Activated CD4-positive, alpha-beta memory T cell treated with anti-CD3 and anti-CD28 coated beads for 36 hours (primary cell): ENCODE measurements at regions of chr2 and their contacts with region 1.

Region 1: GRCh38 chr2:239882331-239882732 is 142.8 kb downstream of the NDUFA10 start:
- DNase-seq: peak; percentile 66
- H3K4me3 Mint-ChIP-seq: no peak overlapping the region
- H3K27ac Mint-ChIP-seq: no peak overlapping the region
- H3K4me1 Mint-ChIP-seq: peaks cover 3% of the 10 kb centered on the region
- H3K27me3 Mint-ChIP-seq: peaks cover 2% of the 10 kb centered on the region

Region 2: DNA sequence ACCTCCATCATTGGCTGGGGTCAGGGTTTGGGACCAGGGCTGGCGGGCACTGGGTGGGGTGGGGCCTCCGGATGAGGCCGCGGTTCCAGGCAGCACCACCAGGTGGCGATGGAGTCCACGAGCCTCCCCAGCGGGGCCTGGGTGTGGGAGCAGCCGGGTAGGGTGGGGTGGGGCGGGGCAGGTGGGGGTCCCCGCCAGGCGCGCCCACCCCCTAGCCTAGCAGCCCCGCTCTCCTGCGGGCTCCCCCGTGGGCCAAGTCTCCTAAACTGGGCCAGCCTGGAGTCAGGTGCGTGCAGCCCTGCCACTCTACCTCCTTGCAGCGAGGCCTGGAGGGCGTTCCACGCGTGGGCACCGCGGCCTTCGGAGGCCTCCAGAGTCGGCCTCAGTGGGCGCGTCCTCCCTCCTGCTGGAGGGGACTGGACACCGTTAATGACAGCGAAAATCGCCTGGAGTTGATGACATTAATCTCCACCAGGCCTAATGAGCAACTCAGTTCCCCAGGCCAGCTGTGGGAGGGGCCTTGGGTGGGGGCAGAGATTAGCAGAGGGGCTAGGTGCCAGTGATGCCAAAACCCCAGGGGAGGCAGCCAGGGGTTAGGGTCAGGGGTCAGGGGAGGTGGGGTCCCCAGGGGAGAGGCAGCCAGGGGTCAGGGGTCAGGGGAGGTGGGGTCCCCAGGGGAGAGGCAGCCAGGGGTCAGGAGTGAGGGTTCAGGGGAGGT is 846.8 kb before region 1 on chr2:
- CTCF ChIA-PET with region 1: no interaction called
- POLR2A ChIA-PET with region 1: no interaction called
- intact Hi-C with region 1: loop called (anchors 5 kb)
- DNase-seq: peak; percentile 76
- H3K4me3 Mint-ChIP-seq: no peak overlapping the region
- H3K27ac Mint-ChIP-seq: no peak overlapping the region
- H3K4me1 Mint-ChIP-seq: no peaks in the 10 kb centered on the region
- H3K27me3 Mint-ChIP-seq: peaks cover 5% of the 10 kb centered on the region

Region 3: DNA sequence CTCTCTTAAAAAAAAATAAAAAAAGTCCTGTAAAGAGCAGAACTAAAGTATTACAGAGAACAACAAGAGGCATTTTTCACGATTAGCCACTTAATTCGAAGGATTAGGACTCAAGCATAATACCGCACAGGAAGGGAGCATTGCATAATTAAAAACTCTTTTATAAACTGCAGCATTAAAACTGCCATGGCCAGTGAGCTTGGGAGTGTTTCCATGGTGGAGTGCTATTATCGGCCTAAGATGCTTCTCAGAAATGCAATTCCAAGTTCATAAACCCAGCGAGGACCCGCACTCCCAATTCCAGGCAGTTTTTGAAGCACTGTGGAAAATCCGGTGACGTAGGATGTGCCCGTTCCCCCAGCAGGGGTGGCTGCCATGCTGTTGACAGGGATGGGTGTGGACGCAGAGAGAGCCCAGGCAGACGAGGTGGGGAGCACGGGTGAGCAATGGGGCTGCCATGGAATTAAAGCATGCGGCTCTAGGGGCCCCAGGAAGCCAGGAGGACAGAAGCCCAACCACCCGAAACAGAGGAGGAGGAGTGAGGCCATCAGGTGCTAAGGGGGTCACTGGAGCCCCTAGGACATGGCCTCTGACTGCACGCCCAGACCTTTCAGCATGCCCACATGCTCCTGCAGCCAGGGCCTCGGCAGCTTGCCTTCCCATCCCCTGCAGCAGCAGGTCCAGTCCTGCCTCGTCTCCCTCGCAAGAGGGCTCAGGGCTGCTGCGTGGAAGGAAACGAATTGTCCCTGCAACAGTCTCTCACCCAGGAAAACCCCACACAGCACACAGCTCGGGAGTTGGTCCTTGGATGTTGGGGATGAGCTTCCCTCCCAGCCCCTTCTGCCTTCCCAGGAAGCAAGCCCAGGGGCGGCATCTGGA is 90.6 kb before region 1 on chr2:
- CTCF ChIA-PET with region 1: no interaction called
- POLR2A ChIA-PET with region 1: no interaction called
- intact Hi-C with region 1: no loop called
- DNase-seq: no peak
- H3K4me3 Mint-ChIP-seq: no peak overlapping the region
- H3K27ac Mint-ChIP-seq: no peak overlapping the region
- H3K4me1 Mint-ChIP-seq: no peaks in the 10 kb centered on the region
- H3K27me3 Mint-ChIP-seq: no peaks in the 10 kb centered on the region

Region 4: GRCh38 chr2:239991689-239992314 is 109.5 kb after region 1 on chr2:
- CTCF ChIA-PET with region 1: no interaction called
- POLR2A ChIA-PET with region 1: no interaction called
- intact Hi-C with region 1: no loop called
- DNase-seq: no peak
- H3K4me3 Mint-ChIP-seq: no peak overlapping the region
- H3K27ac Mint-ChIP-seq: no peak overlapping the region
- H3K4me1 Mint-ChIP-seq: no peaks in the 10 kb centered on the region
- H3K27me3 Mint-ChIP-seq: no peaks in the 10 kb centered on the region